MCF 10A (cell line): ENCODE measurements at regions of chr11 and their contacts with region 1.

Region 1: GRCh38 chr11:134050541-134051383 is 18.1 kb upstream of the JAM3 start:
- DNase-seq: peak; percentile 68
- H3K4me3 Mint-ChIP-seq: no peak overlapping the region
- H3K27ac Mint-ChIP-seq: no peak overlapping the region
- H3K4me1 Mint-ChIP-seq: peaks cover 21% of the 10 kb centered on the region
- H3K27me3 Mint-ChIP-seq: no peaks in the 10 kb centered on the region
- CTCF ChIP-seq: peak; percentile 92

Region 2: GRCh38 chr11:133064152-133064877 is 986.4 kb before region 1 on chr11:
- CTCF ChIA-PET with region 1: no interaction called
- POLR2A ChIA-PET with region 1: no interaction called
- intact Hi-C with region 1: no loop called
- DNase-seq: no peak
- H3K4me3 Mint-ChIP-seq: no peak overlapping the region
- H3K27ac Mint-ChIP-seq: no peak overlapping the region
- H3K4me1 Mint-ChIP-seq: no peaks in the 10 kb centered on the region
- H3K27me3 Mint-ChIP-seq: no peaks in the 10 kb centered on the region
- CTCF ChIP-seq: no peak

Region 3: GRCh38 chr11:133947321-133947756 is 103.4 kb before region 1 on chr11:
- CTCF ChIA-PET with region 1: interaction called, 44 read pairs
- POLR2A ChIA-PET with region 1: interaction called, 3 read pairs
- intact Hi-C with region 1: loop called (anchors 1 kb)
- DNase-seq: peak; percentile 62
- H3K4me3 Mint-ChIP-seq: no peak overlapping the region
- H3K27ac Mint-ChIP-seq: no peak overlapping the region
- H3K4me1 Mint-ChIP-seq: peaks cover 53% of the 10 kb centered on the region
- H3K27me3 Mint-ChIP-seq: no peaks in the 10 kb centered on the region
- CTCF ChIP-seq: peak; percentile 28

Region 4: DNA sequence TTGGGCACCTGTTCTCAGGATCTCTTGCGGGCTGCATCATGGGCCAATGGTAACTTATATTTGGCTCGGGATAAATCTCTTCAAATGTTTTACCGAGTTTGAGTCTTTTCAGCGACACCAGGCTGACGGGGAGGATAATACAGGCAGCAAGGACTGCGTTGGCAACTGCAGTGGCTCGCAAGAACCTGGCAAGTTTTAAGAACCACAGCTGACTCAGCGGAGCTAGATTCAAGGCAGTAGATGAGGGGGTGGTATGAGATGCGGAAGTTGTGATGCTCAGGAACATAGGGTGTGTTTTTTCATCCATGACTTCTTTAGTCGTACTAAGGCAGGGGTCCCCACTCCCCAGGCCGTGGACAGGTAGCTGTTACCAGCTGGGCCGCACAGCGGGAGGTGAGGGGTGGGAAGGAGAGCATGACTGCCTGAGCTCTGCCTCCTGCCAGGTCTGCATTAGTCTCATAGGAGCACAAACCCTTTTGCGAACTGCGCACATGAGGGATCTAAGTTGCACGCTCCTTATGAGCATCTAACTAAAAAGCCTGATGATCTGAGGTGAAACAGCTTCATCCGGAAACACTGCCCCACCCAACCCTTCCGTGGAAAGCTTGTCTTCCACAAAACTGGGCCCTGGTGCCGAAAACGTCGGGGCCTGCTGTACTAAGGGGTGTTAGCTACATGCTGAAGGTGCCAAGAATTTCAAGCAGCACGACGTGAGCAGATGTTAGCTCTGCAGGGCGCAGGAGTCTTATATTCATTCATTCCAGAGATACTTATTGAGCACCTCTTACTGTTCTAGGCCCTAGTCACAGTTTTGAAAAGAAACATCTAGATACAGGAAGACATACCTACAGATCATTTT is 11.7 kb after region 1 on chr11:
- CTCF ChIA-PET with region 1: interaction called, 49 read pairs
- POLR2A ChIA-PET with region 1: interaction called, 3 read pairs
- intact Hi-C with region 1: no loop called
- DNase-seq: no peak
- H3K4me3 Mint-ChIP-seq: no peak overlapping the region
- H3K27ac Mint-ChIP-seq: no peak overlapping the region
- H3K4me1 Mint-ChIP-seq: no peaks in the 10 kb centered on the region
- H3K27me3 Mint-ChIP-seq: peaks cover 17% of the 10 kb centered on the region
- CTCF ChIP-seq: no peak

Region 5: GRCh38 chr11:134098566-134099184 is 47.9 kb after region 1 on chr11:
- CTCF ChIA-PET with region 1: interaction called, 72 read pairs
- POLR2A ChIA-PET with region 1: interaction called, 6 read pairs
- intact Hi-C with region 1: loop called (anchors 1 kb)
- DNase-seq: peak; percentile 14
- H3K4me3 Mint-ChIP-seq: no peak overlapping the region
- H3K27ac Mint-ChIP-seq: no peak overlapping the region
- H3K4me1 Mint-ChIP-seq: no peaks in the 10 kb centered on the region
- H3K27me3 Mint-ChIP-seq: peaks cover 23% of the 10 kb centered on the region
- CTCF ChIP-seq: peak; percentile 41

Region 6: GRCh38 chr11:134132793-134133192 is 82.0 kb after region 1 on chr11:
- CTCF ChIA-PET with region 1: interaction called, 45 read pairs
- POLR2A ChIA-PET with region 1: interaction called, 5 read pairs
- intact Hi-C with region 1: no loop called
- DNase-seq: no peak
- H3K4me3 Mint-ChIP-seq: no peak overlapping the region
- H3K27ac Mint-ChIP-seq: no peak overlapping the region
- H3K4me1 Mint-ChIP-seq: no peaks in the 10 kb centered on the region
- H3K27me3 Mint-ChIP-seq: no peaks in the 10 kb centered on the region
- CTCF ChIP-seq: no peak